ENCODE measurements at regions of chr11 and their contacts with region 1.

Region 1: GRCh38 chr11:133889893-133890292 is 44.6 kb upstream of the SPATA19 start:
- DNase-seq: no peak

Region 2: DNA sequence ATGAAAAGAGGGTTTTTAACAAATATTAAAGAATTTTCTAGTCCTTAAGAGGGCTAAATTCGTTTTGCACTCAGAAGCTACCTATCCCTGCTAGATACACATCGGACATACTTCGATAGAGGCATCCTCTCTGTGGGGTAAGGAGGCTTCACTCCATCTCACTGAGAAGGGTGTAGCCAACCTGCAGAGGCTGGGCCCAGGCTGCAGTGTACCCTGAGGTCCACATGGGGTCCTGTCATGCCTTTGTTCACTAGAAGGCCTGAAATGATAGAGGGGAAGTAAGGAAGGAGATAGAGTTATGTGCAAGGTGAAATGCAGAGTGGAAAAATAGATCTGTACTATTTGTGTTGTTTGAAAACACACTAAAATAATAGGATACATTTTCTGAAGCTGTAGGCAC is 21.3 kb after region 1 on chr11:
- intact Hi-C with region 1: no loop called
- DNase-seq: no peak

Region 3: GRCh38 chr11:134360050-134360835 is 470.4 kb after region 1 on chr11:
- intact Hi-C with region 1: loop called in 1 of 2 experiments (anchors 10 kb)
- DNase-seq: peak; percentile 92